AG04450 (cell line): ENCODE measurements at regions of chr22 and their contacts with region 1.

Region 1: DNA sequence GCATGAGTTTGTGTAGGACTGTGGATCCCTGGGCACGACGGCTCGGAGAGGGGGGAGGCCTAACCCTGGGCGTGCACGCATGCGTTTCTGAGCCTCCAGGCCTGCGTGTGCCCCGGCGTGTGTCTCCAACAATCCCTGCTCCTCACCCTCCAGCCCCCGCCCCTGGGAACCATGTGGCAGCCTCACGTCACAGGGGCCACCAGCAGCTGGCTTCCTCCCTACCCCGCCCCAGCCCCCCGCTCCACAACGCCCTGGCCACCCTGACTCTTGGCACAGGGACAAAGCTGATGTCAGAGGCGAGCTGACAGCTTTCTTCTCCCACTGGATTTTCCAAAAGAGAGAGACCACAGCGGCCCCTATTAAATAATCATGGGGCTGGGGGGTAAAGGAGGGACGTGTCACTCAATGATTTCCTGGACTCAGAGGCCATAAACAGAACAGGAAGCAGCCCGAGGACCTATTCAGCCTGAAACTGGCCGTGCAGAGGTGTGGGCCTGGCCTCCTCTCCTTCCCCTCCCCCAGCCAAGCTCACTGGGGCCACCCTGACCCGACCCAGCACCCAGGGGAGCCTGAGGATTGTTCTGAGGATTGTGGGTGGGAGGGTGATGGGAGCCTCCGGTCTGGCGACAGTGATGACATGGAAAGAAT is 6.8 kb upstream of the LIF start:
- DNase-seq: no peak
- H3K4me3 ChIP-seq: no peak overlapping the region
- H3K27ac ChIP-seq: peak overlapping the region; percentile 77
- H3K27me3 ChIP-seq: no peaks in the 10 kb centered on the region
- CTCF ChIP-seq: no peak

Region 2: GRCh38 chr22:30121960-30122359 is 131.4 kb before region 1 on chr22:
- CTCF ChIA-PET with region 1: interaction called, 12 read pairs
- POLR2A ChIA-PET with region 1: no interaction called
- DNase-seq: no peak
- H3K4me3 ChIP-seq: no peak overlapping the region; the same call in 1 of the 2 replicates
- H3K27ac ChIP-seq: no peak overlapping the region
- H3K27me3 ChIP-seq: no peaks in the 10 kb centered on the region
- CTCF ChIP-seq: no peak

Region 3: GRCh38 chr22:30127749-30128166 is 125.6 kb before region 1 on chr22:
- CTCF ChIA-PET with region 1: interaction called, 16 read pairs
- POLR2A ChIA-PET with region 1: no interaction called
- DNase-seq: peak; percentile 29
- H3K4me3 ChIP-seq: no peak overlapping the region
- H3K27ac ChIP-seq: no peak overlapping the region
- H3K27me3 ChIP-seq: no peaks in the 10 kb centered on the region
- CTCF ChIP-seq: no peak

Region 4: GRCh38 chr22:30191040-30191701 is 62.2 kb before region 1 on chr22:
- CTCF ChIA-PET with region 1: interaction called, 12 read pairs
- POLR2A ChIA-PET with region 1: interaction called, 20 read pairs
- DNase-seq: no peak
- H3K4me3 ChIP-seq: no peak overlapping the region
- H3K27ac ChIP-seq: no peak overlapping the region
- H3K27me3 ChIP-seq: no peaks in the 10 kb centered on the region
- CTCF ChIP-seq: no peak

Region 5: DNA sequence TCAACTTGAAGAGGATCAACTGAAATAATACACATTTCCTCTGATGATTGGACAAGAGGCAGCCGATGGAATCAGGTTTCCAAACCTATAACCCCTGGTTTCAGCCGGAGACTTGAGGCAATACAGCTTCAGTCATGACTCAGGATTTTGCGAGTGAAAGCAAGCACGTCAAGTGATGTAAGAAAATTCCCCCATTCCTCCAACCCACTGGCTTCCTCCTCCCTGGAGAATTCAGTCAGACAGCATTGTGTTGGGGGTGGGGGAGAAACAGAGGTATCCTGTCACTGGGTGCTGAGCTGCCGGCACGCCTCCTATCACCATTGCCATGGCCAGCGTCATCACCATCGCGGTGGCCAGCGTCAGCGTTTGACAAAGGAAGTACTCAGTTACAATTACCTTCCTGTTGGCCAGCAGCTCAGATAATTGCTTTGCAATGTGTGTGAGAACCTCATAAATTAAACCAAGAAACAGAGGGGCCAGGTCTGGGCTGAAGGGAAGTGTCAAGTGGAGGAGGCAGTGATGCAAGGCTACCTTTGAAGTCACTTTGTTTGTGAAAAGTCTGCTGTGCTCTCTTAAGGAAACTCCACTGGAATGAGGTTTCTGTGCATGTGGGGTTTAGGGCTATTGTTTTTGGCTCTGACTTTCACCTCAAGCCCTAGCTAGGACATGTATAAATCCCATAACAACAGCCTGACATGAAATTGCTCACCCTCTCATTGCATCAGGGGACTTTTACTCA is 57.0 kb before region 1 on chr22:
- CTCF ChIA-PET with region 1: interaction called, 12 read pairs
- POLR2A ChIA-PET with region 1: interaction called, 20 read pairs
- DNase-seq: peak; percentile 100
- H3K4me3 ChIP-seq: peak overlapping the region; percentile 28; the same call in 1 of the 2 replicates
- H3K27ac ChIP-seq: peak overlapping the region; percentile 100
- H3K27me3 ChIP-seq: no peaks in the 10 kb centered on the region
- CTCF ChIP-seq: no peak

Region 6: GRCh38 chr22:30277547-30278344 is 24.4 kb after region 1 on chr22:
- CTCF ChIA-PET with region 1: no interaction called
- POLR2A ChIA-PET with region 1: no interaction called
- DNase-seq: no peak
- H3K4me3 ChIP-seq: no peak overlapping the region
- H3K27ac ChIP-seq: peak overlapping the region; percentile 65
- H3K27me3 ChIP-seq: no peaks in the 10 kb centered on the region
- CTCF ChIP-seq: no peak